PC-9 (cell line): ENCODE measurements at regions of chr17 and their contacts with region 1.

Region 1: DNA sequence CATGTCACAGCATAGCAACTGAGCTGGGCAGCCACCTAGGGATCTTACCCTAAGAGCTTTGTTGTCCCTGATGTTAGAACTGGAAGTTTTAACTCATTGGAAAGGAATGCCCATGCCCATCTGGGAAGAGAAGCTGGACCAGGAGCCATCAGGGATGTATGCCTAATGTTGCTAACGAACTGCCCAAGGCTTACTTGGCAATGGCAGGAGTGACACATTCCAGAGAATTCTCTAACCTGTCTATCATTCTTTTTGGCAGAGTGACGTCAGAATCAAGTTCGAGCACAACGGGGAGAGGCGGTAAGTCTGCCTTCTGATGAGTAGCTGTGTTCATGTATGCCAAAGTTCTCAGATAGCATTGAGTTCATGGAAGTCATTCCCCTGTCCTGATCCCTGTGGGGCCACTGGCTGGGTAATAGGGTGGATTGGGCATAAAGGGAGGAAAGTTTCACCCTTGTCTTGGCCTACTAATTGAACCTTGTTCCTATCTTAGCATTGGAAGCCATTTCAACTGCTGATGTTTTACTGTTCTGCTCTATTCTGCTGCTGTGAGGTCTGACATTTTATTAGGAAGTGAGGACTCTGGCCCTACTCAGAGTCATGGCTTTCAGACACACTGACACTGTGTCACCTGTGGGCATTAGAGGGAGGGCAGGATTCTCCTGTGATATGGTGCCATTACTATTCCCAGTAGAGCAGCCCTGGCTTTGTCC is 23.7 kb downstream of the MAP3K3 start:
- DNase-seq: peak in 1 of 2 experiments; percentile 16
- H3K4me3 ChIP-seq: no peak overlapping the region
- H3K27ac ChIP-seq: no peak overlapping the region
- H3K4me1 ChIP-seq: peaks cover 18% of the 10 kb centered on the region
- H3K27me3 ChIP-seq: no peaks in the 10 kb centered on the region
- CTCF ChIP-seq: no peak

Region 2: DNA sequence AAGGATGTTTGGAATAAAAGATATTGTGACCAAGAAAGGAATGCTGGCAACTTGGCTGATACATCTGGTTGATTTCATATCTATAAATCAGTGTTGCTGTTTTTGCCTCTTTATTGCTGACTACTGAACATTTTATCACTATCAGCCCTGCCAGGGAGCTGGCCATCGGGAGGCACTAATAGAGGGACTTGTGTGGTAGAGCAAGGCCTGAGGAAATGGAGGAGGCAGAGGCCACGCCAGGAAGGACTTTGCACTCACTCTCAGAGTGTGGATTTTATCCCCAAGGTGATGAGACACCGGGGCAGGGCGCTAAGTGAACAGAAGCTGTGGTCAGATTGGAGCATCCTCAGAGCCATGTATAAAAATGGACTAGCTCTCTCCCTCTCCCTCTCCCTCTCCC is 190.5 kb before region 1 on chr17:
- CTCF ChIA-PET with region 1: no interaction called
- POLR2A ChIA-PET with region 1: interaction called, 17 read pairs
- intact Hi-C with region 1: no loop called
- DNase-seq: no peak
- H3K4me3 ChIP-seq: no peak overlapping the region
- H3K27ac ChIP-seq: no peak overlapping the region
- H3K4me1 ChIP-seq: peaks cover 7% of the 10 kb centered on the region
- H3K27me3 ChIP-seq: no peaks in the 10 kb centered on the region
- CTCF ChIP-seq: no peak

Region 3: GRCh38 chr17:63634163-63634562 is 11.8 kb before region 1 on chr17:
- CTCF ChIA-PET with region 1: no interaction called
- POLR2A ChIA-PET with region 1: no interaction called
- intact Hi-C with region 1: no loop called
- DNase-seq: no peak
- H3K4me3 ChIP-seq: no peak overlapping the region
- H3K27ac ChIP-seq: no peak overlapping the region
- H3K4me1 ChIP-seq: no peaks in the 10 kb centered on the region
- H3K27me3 ChIP-seq: no peaks in the 10 kb centered on the region
- CTCF ChIP-seq: no peak

Region 4: GRCh38 chr17:63805591-63805990 is 159.7 kb after region 1 on chr17:
- CTCF ChIA-PET with region 1: no interaction called
- POLR2A ChIA-PET with region 1: no interaction called
- intact Hi-C with region 1: no loop called
- DNase-seq: no peak
- H3K4me3 ChIP-seq: no peak overlapping the region
- H3K27ac ChIP-seq: no peak overlapping the region
- H3K4me1 ChIP-seq: no peaks in the 10 kb centered on the region
- H3K27me3 ChIP-seq: no peaks in the 10 kb centered on the region
- CTCF ChIP-seq: no peak